CD4-positive, alpha-beta memory T cell (primary cell): ENCODE measurements at regions of chr6 and their contacts with region 1.

Region 1: DNA sequence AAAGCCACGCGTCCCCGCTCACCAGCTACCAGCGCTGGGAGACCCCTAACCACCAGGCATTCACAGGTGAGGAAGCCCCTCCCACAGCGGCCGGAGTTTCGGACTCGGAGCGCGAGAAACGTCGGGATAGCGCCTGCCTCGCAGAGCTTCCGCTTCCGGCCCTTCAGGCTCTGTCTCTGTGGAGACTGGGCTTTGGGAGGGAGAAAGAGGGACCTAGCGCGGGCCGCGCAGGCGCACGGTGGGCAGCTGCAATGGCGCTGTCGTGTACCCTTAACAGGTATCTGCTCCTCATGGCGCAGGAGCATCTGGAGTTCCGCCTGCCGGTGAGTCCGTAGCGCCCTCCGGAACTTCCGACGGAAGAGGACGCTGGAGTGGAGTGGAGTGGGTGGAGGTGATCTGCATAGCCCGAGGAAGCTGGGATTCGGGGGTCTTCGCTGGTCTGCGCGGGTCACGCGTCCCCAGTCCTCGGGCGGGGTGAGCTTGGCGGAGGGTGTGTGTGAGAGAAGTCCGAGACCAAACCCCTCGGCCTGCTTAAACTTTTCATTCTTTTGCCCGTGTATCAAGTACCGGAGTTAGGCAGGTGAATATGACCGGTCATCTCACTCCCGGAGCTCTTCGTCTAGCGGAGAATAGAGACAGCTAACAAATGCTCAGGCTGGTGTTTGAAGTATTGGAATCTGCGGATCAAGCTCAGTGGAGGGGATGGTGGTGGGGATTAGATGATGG is at the start of gene TRMT11:
- DNase-seq: peak; percentile 80 to 86 (median 81)
- H3K4me3 ChIP-seq: peak within 1 kb of the TSS; percentile 93 to 95
- H3K4me3 Mint-ChIP-seq: peak within 1 kb of the TSS; percentile 6 to 57 (median 24)
- H3K27ac ChIP-seq: peak within 1 kb of the TSS; percentile 77
- H3K27ac Mint-ChIP-seq: no peak within 1 kb of the TSS
- H3K4me1 ChIP-seq: peaks cover 31% of the 10 kb centered on the region
- H3K4me1 Mint-ChIP-seq: peaks cover 2 to 15% (median 8%) of the 10 kb centered on the region in 4 donors
- H3K27me3 ChIP-seq: no peaks in the 10 kb centered on the region
- H3K27me3 Mint-ChIP-seq: no peaks in the 10 kb centered on the region
- total RNA-seq, gene TRMT11: 25.5 to 30.8 TPM

Region 2: GRCh38 chr6:124703541-124703940 is 1282.9 kb before region 1 on chr6:
- CTCF ChIA-PET with region 1: no interaction called
- POLR2A ChIA-PET with region 1: no interaction called
- intact Hi-C with region 1: no loop called
- DNase-seq: no peak
- H3K4me3 ChIP-seq: no peak overlapping the region
- H3K4me3 Mint-ChIP-seq: no peak overlapping the region
- H3K27ac ChIP-seq: no peak overlapping the region
- H3K27ac Mint-ChIP-seq: no peak overlapping the region
- H3K4me1 ChIP-seq: no peaks in the 10 kb centered on the region
- H3K4me1 Mint-ChIP-seq: peaks cover 0 to 3% (median 0%) of the 10 kb centered on the region in 4 donors
- H3K27me3 ChIP-seq: no peaks in the 10 kb centered on the region
- H3K27me3 Mint-ChIP-seq: no peaks in the 10 kb centered on the region

Region 3: DNA sequence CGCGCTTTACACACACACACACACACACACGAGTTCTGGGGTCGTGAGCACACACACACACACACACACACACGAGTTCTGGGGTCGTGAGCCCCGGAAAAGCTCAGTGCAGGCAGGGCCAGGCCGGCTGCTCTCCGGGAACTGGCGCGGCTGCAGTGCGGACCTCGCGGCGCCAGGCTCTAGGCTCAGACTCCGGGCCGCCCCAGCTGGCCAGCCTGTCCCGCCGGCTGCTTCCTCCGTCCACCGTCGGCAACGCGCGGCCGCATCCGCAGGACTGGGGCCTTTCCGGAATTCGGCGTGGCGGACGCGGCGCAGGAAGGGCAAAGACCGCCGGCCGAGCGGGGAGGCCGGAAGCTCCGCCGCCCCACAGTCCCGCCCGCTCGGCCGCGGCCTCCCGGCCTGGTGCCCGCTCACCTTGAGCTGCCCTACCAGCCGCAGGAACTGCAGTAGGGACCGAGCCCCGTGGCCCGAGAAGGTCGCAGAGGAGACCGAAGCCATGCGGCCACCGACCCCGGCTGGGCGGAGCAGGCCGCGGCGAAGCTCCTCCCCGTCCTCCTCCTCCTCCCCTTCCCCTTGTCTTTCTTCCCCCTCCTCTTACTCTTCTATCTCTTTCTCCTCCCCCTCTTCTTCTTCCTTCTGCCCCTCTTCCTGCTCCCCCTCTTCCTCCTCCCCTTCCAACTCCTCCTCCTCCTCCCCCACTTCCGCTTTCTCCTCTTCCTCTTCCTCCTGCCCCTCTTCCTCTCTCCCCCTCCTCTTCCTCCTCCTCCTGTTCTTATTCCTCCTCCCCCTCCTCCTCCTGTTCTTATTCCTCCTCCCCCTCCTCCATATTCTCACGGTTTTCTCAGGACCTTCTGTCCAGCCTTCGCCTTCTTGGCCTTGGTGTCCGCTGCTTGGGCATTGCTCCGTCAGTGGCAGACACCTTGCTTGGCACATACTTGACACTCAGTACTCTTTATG is 684.8 kb before region 1 on chr6 and contains the start of gene HDDC2:
- CTCF ChIA-PET with region 1: no interaction called
- POLR2A ChIA-PET with region 1: interaction called, 13 read pairs
- intact Hi-C with region 1: loop called (anchors 5 kb)
- DNase-seq: peak in 4 of 5 donors; percentile 32 to 43 (median 37)
- H3K4me3 ChIP-seq: peak within 1 kb of the TSS; percentile 44 to 62
- H3K4me3 Mint-ChIP-seq: peak within 1 kb of the TSS; percentile 82 to 97 (median 92)
- H3K27ac ChIP-seq: peak within 1 kb of the TSS; percentile 62
- H3K27ac Mint-ChIP-seq: peak within 1 kb of the TSS; percentile 78 to 97 (median 94)
- H3K4me1 ChIP-seq: peaks cover 47% of the 10 kb centered on the region
- H3K4me1 Mint-ChIP-seq: peaks cover 44 to 59% (median 54%) of the 10 kb centered on the region in 4 donors
- H3K27me3 ChIP-seq: no peaks in the 10 kb centered on the region
- H3K27me3 Mint-ChIP-seq: no peaks in the 10 kb centered on the region
- total RNA-seq, gene HDDC2: 49.5 to 53.5 TPM

Region 4: GRCh38 chr6:125931733-125932450 is 54.6 kb before region 1 on chr6:
- CTCF ChIA-PET with region 1: no interaction called
- POLR2A ChIA-PET with region 1: no interaction called
- intact Hi-C with region 1: no loop called
- DNase-seq: no peak
- H3K4me3 ChIP-seq: no peak overlapping the region
- H3K4me3 Mint-ChIP-seq: no peak overlapping the region
- H3K27ac ChIP-seq: no peak overlapping the region
- H3K27ac Mint-ChIP-seq: peak overlapping the region in 4 of 7 donors; percentile 11 to 89 (median 44)
- H3K4me1 ChIP-seq: no peaks in the 10 kb centered on the region
- H3K4me1 Mint-ChIP-seq: peaks cover 0 to 4% (median 1%) of the 10 kb centered on the region in 4 donors
- H3K27me3 ChIP-seq: no peaks in the 10 kb centered on the region
- H3K27me3 Mint-ChIP-seq: no peaks in the 10 kb centered on the region

Region 5: DNA sequence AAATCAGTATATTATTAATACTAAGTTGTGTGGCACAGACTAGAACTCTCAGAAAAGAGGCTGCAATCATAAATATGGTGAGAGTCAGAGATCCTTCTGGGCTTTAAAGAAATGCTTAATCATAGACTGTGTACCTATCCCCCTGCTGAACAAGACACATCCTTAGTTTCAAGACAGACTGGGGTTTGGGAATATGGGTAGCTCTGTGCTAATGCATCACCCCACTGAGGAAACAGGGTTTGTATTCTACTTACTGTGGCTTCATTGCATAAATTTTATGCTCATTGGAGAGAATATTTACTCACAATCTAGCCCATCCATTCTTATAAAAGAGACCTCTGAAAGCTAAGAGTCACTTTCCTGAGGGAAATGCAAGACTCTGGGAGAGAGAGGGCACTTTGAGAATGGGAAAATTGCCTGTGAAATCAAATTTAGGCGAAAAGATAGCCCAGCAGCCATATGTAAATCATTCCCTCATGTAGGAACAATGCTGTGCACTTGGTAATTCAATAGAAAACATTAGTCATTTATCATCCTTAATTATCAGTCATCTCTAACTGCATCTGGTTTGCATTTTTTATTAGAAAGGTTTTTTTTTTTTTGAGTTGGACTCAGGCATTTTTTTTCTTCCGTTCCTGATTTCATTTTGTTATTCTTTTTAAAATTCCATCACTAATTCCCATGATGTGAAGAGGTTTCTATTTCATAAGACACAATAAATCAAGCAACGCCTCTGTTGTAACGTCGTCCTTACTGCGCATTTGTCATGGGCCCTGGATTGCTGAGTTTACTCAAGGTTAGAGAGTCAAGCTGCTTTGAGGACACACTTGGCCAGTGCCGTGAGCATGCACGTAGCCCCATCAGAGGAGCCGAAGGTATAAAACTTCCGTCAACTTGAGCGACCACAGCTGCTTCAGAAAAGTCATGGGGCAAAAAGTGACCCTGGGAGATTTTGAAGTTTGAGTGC is 91.6 kb after region 1 on chr6:
- CTCF ChIA-PET with region 1: no interaction called
- POLR2A ChIA-PET with region 1: no interaction called
- intact Hi-C with region 1: no loop called
- DNase-seq: no peak
- H3K4me3 ChIP-seq: no peak overlapping the region
- H3K4me3 Mint-ChIP-seq: no peak overlapping the region
- H3K27ac ChIP-seq: no peak overlapping the region
- H3K27ac Mint-ChIP-seq: no peak overlapping the region
- H3K4me1 ChIP-seq: no peaks in the 10 kb centered on the region
- H3K4me1 Mint-ChIP-seq: no peaks in the 10 kb centered on the region
- H3K27me3 ChIP-seq: no peaks in the 10 kb centered on the region
- H3K27me3 Mint-ChIP-seq: no peaks in the 10 kb centered on the region